MCF 10A (cell line): ENCODE measurements at regions of chr5 and their contacts with region 1.

Region 1: GRCh38 chr5:72816311-72817145 is at the start of gene TNPO1:
- DNase-seq: peak; percentile 94
- H3K4me3 Mint-ChIP-seq: peak within 1 kb of the TSS; percentile 97
- H3K27ac Mint-ChIP-seq: peak within 1 kb of the TSS; percentile 90
- H3K4me1 Mint-ChIP-seq: peaks cover 15% of the 10 kb centered on the region
- H3K27me3 Mint-ChIP-seq: no peaks in the 10 kb centered on the region
- CTCF ChIP-seq: no peak
- total RNA-seq, gene TNPO1: 147 and 167 TPM in 2 replicates

Region 2: DNA sequence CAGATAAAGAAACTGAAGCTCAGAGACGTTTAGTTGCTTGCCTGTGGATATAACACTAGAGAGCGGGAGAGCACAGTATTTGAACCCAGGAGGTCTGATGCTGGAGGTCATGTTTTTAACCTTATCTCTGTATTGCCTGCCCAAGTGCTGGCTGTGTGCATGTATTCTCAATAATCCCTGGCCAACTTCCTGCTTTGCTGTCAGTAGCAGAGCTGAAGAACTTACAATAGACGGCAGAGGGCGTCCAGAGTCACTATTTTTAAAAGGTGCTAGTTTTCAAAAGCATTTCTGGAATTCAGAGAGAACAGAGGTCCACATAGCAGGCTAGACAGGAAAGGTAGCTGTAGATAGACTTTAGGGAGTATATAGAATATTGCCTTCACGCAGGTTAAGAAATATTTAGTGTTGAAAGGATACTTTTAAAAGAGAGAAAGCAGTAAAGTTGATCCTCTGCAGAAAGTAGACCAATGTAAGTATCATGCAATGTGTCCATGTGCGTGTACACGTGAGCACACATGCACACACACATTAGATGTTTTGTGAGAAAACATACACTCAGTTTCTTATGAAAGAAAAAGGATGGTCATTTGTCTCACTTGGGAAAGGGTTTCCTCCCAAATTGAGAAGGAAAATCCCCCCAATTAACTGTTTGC is 450.1 kb before region 1 on chr5:
- CTCF ChIA-PET with region 1: interaction called, 29 read pairs
- POLR2A ChIA-PET with region 1: interaction called, 55 read pairs
- intact Hi-C with region 1: loop called (anchors 1 kb)
- DNase-seq: peak; percentile 80
- H3K4me3 Mint-ChIP-seq: no peak overlapping the region
- H3K27ac Mint-ChIP-seq: no peak overlapping the region
- H3K4me1 Mint-ChIP-seq: peaks cover 39% of the 10 kb centered on the region
- H3K27me3 Mint-ChIP-seq: no peaks in the 10 kb centered on the region
- CTCF ChIP-seq: peak; percentile 73

Region 3: DNA sequence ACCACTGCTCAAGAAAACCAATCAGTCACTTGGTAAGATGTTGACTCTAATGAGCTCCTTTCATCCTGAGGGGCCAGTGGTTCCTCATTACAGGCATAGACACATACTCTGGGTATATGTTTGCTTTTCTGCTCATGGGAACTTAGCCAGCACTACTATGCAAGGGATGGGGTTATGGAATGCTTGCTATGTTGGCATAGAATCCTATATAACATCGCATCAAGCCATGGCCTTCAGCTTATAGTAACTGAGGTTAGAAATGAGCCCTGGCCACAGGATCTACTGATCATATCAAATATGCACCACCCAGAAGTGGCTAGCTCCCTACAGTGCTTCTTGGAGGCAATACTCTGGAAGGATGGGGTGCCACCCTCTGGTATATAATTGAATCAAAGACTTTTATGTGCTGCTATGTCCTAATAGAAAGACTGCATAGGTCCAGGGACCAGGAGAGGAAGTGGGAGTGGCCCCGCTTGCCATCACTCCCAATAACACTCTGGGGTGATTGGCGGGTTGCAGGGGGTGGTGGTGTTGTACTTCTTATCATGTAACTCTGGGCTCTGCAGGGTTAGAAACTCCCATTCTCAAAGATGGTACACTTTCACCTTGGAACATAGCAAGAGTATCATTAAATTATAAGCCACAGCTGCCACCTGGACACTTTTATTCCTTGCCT is 379.6 kb before region 1 on chr5:
- CTCF ChIA-PET with region 1: interaction called, 3 read pairs
- POLR2A ChIA-PET with region 1: interaction called, 29 read pairs
- intact Hi-C with region 1: no loop called
- DNase-seq: peak; percentile 38
- H3K4me3 Mint-ChIP-seq: no peak overlapping the region
- H3K27ac Mint-ChIP-seq: peak overlapping the region; percentile 93
- H3K4me1 Mint-ChIP-seq: peaks cover 67% of the 10 kb centered on the region
- H3K27me3 Mint-ChIP-seq: no peaks in the 10 kb centered on the region
- CTCF ChIP-seq: no peak

Region 4: DNA sequence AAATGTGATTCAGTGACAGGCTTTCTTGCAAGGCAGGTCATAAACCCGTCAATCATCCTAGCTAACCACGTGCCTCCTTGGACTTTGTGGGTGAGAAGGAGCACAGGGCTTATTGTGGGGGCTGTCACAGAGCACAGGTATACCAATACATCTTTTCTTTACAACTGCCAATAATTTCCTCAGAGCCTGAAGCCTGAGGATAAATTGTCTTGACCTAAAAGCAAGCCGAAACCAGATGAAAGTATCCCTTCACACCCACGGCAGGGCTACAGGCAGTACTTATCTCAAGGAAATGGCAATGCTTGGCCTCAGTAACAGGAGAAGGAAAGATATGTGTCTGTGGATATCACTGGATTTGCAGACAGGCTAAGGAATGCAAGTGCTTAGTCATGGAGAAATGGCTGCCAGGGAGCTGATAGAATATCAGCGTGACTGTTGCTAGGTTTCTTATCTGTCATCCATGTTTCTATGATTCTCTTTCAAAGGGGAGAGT is 219.0 kb before region 1 on chr5:
- CTCF ChIA-PET with region 1: interaction called, 18 read pairs
- POLR2A ChIA-PET with region 1: interaction called, 42 read pairs
- intact Hi-C with region 1: no loop called
- DNase-seq: peak; percentile 49
- H3K4me3 Mint-ChIP-seq: no peak overlapping the region
- H3K27ac Mint-ChIP-seq: no peak overlapping the region
- H3K4me1 Mint-ChIP-seq: peaks cover 19% of the 10 kb centered on the region
- H3K27me3 Mint-ChIP-seq: no peaks in the 10 kb centered on the region
- CTCF ChIP-seq: no peak

Region 5: DNA sequence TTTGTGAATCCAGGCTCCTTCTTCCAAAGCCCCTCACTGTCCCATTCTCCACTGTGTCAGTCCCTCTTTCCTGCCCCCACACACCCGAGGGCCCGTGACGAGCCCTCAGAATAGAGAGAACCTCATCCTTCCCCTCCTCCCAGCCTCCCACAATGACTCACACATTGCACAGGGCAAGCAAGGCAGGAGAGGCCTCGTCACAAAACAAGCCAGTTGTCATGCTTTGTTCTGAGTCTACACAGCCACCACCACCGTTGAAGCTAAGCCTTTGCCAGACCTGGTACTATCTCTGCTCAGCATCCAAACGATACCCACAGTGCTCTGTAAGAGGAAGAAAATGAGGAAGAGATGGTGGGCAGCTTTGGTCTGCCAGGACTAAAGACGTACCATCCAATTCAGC is 167.1 kb before region 1 on chr5:
- CTCF ChIA-PET with region 1: interaction called, 3 read pairs
- POLR2A ChIA-PET with region 1: interaction called, 10 read pairs
- intact Hi-C with region 1: no loop called
- DNase-seq: peak; percentile 69
- H3K4me3 Mint-ChIP-seq: no peak overlapping the region
- H3K27ac Mint-ChIP-seq: no peak overlapping the region
- H3K4me1 Mint-ChIP-seq: peaks cover 24% of the 10 kb centered on the region
- H3K27me3 Mint-ChIP-seq: no peaks in the 10 kb centered on the region
- CTCF ChIP-seq: no peak

Region 6: GRCh38 chr5:72752909-72753308 is 63.6 kb before region 1 on chr5:
- CTCF ChIA-PET with region 1: no interaction called
- POLR2A ChIA-PET with region 1: no interaction called
- intact Hi-C with region 1: no loop called
- DNase-seq: no peak
- H3K4me3 Mint-ChIP-seq: no peak overlapping the region
- H3K27ac Mint-ChIP-seq: no peak overlapping the region
- H3K4me1 Mint-ChIP-seq: no peaks in the 10 kb centered on the region
- H3K27me3 Mint-ChIP-seq: no peaks in the 10 kb centered on the region
- CTCF ChIP-seq: no peak

Region 7: DNA sequence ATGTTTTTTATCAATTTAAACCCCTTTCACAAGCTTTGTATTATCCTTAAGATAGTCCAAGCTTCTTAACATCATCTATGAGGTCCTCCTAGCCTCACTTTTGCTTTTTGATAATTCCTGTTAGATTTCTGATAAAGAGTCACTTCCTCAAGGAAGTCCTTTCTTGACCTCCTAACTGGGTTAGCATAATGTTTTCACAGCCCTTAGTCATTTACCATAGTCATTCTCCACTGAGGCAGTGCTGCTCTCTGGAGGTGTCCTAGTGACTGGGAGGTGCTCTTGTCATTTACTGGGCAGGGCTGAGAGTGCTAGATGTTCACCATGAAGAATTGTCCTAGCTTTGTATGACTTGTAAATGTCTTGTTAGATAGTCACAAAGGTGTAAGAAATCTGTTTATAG is 26.3 kb after region 1 on chr5:
- CTCF ChIA-PET with region 1: interaction called, 18 read pairs
- POLR2A ChIA-PET with region 1: interaction called, 229 read pairs
- intact Hi-C with region 1: loop called (anchors 2 kb)
- DNase-seq: peak; percentile 60
- H3K4me3 Mint-ChIP-seq: no peak overlapping the region
- H3K27ac Mint-ChIP-seq: peak overlapping the region; percentile 86
- H3K4me1 Mint-ChIP-seq: peaks cover 66% of the 10 kb centered on the region
- H3K27me3 Mint-ChIP-seq: no peaks in the 10 kb centered on the region
- CTCF ChIP-seq: no peak

Region 8: DNA sequence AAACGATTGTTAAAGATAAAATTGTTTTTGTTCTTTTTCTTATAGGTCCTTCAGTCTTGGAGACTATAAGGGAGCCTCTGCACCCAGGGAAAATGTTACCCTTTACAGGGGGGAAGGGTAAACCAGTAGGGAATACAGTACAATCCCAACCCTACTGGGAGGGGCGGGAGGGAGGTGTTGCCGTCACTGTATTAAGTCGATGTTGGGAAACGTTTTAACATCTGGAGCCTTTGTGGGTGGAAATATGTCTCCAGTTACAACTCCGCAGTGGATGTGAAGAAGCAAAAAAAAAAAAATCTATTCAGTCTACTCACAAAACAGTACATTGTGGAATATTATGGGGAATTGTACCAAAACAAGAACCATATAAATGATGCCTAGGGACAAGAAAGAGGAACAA is 92.1 kb after region 1 on chr5:
- CTCF ChIA-PET with region 1: no interaction called
- POLR2A ChIA-PET with region 1: no interaction called
- intact Hi-C with region 1: no loop called
- DNase-seq: no peak
- H3K4me3 Mint-ChIP-seq: no peak overlapping the region
- H3K27ac Mint-ChIP-seq: no peak overlapping the region
- H3K4me1 Mint-ChIP-seq: no peaks in the 10 kb centered on the region
- H3K27me3 Mint-ChIP-seq: no peaks in the 10 kb centered on the region
- CTCF ChIP-seq: no peak

Region 9: GRCh38 chr5:73120222-73121118 is 303.9 kb after region 1 on chr5 and contains the start of gene TMEM171:
- CTCF ChIA-PET with region 1: no interaction called
- POLR2A ChIA-PET with region 1: no interaction called
- intact Hi-C with region 1: no loop called
- DNase-seq: peak; percentile 66
- H3K4me3 Mint-ChIP-seq: peak within 1 kb of the TSS; percentile 50
- H3K27ac Mint-ChIP-seq: no peak within 1 kb of the TSS
- H3K4me1 Mint-ChIP-seq: peaks cover 12% of the 10 kb centered on the region
- H3K27me3 Mint-ChIP-seq: no peaks in the 10 kb centered on the region
- CTCF ChIP-seq: no peak
- total RNA-seq, gene TMEM171: 0.42 and 0.75 TPM in 2 replicates

Region 10: GRCh38 chr5:73448463-73449136 is 632.1 kb after region 1 on chr5 and contains the start of gene FOXD1:
- CTCF ChIA-PET with region 1: no interaction called
- POLR2A ChIA-PET with region 1: no interaction called
- intact Hi-C with region 1: no loop called
- DNase-seq: peak; percentile 91
- H3K4me3 Mint-ChIP-seq: peak within 1 kb of the TSS; percentile 85
- H3K27ac Mint-ChIP-seq: peak within 1 kb of the TSS; percentile 87
- H3K4me1 Mint-ChIP-seq: peaks cover 11% of the 10 kb centered on the region
- H3K27me3 Mint-ChIP-seq: no peaks in the 10 kb centered on the region
- CTCF ChIP-seq: no peak
- total RNA-seq, gene FOXD1: 46.4 and 50.9 TPM in 2 replicates